CD4-positive, alpha-beta memory T cell (primary cell): ENCODE measurements at regions of chr7 and their contacts with region 1.

Region 1: GRCh38 chr7:128059143-128059988 is 28.1 kb upstream of the LRRC4 start:
- DNase-seq: peak in 4 of 5 donors; percentile 49 to 52 (median 50)
- H3K4me3 ChIP-seq: no peak overlapping the region
- H3K4me3 Mint-ChIP-seq: peak overlapping the region in 7 of 8 donors; percentile 28 to 84 (median 59)
- H3K27ac ChIP-seq: peak overlapping the region; percentile 14
- H3K27ac Mint-ChIP-seq: peak overlapping the region; percentile 17 to 94 (median 58)
- H3K4me1 ChIP-seq: peaks cover 38% of the 10 kb centered on the region
- H3K4me1 Mint-ChIP-seq: peaks cover 37 to 65% (median 46%) of the 10 kb centered on the region in 4 donors
- H3K27me3 ChIP-seq: no peaks in the 10 kb centered on the region
- H3K27me3 Mint-ChIP-seq: no peaks in the 10 kb centered on the region

Region 2: DNA sequence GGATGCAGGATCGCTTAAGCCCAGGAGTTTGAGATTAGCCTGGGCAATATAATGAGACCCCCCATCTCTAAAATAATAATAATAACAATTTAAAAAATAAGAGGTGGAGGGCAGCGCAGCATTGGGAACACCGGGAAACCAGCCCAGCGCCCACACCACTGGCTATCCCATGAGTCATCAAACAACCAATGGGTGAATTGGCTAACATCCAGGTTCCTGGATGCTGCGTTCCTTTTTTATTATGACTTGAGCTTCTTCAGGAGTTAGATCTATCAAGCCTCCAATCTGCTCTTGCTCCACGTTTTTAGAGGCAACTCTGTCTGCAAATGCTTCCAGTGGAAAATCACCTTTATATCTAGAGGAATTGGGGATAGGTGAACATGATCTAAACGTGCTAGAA is 18.2 kb before region 1 on chr7:
- CTCF ChIA-PET with region 1: no interaction called
- POLR2A ChIA-PET with region 1: no interaction called
- intact Hi-C with region 1: no loop called
- DNase-seq: no peak
- H3K4me3 ChIP-seq: no peak overlapping the region
- H3K4me3 Mint-ChIP-seq: no peak overlapping the region
- H3K27ac ChIP-seq: no peak overlapping the region
- H3K27ac Mint-ChIP-seq: no peak overlapping the region
- H3K4me1 ChIP-seq: no peaks in the 10 kb centered on the region
- H3K4me1 Mint-ChIP-seq: peaks cover 7 to 28% (median 10%) of the 10 kb centered on the region in 4 donors
- H3K27me3 ChIP-seq: no peaks in the 10 kb centered on the region
- H3K27me3 Mint-ChIP-seq: no peaks in the 10 kb centered on the region

Region 3: DNA sequence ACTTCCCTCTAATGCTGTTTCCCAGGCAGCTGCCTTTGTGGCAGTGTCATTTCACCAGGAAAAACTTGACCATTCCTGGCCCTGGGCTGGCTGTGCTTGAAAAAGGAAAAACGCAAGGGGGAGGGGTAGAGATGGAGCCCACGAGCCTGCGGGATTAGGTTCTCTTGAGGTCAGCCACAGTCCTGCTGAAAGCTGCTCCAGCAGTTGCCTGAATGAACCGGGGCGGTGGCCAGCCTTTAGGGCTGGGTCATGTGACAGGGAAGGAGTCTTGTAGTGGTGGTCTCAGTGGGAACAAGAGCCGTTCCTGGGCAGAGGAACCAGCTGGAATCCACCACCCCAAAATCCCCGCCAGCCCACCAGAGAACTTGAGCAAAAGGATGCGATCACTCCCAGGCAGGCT is 23.1 kb after region 1 on chr7:
- CTCF ChIA-PET with region 1: no interaction called
- POLR2A ChIA-PET with region 1: no interaction called
- intact Hi-C with region 1: loop called (anchors 1 kb)
- DNase-seq: no peak
- H3K4me3 ChIP-seq: no peak overlapping the region
- H3K4me3 Mint-ChIP-seq: no peak overlapping the region
- H3K27ac ChIP-seq: no peak overlapping the region
- H3K27ac Mint-ChIP-seq: peak overlapping the region in 1 of 7 donors; percentile 63
- H3K4me1 ChIP-seq: no peaks in the 10 kb centered on the region
- H3K4me1 Mint-ChIP-seq: peaks cover 0 to 2% (median 0%) of the 10 kb centered on the region in 4 donors
- H3K27me3 ChIP-seq: no peaks in the 10 kb centered on the region
- H3K27me3 Mint-ChIP-seq: no peaks in the 10 kb centered on the region

Region 4: GRCh38 chr7:128108641-128109423 is 49.5 kb after region 1 on chr7:
- CTCF ChIA-PET with region 1: no interaction called
- POLR2A ChIA-PET with region 1: interaction called, 5 read pairs
- intact Hi-C with region 1: loop called (anchors 1 kb)
- DNase-seq: peak in 4 of 5 donors; percentile 53 to 69 (median 62)
- H3K4me3 ChIP-seq: peak overlapping the region; percentile 20 to 21
- H3K4me3 Mint-ChIP-seq: peak overlapping the region; percentile 71 to 93 (median 84)
- H3K27ac ChIP-seq: peak overlapping the region; percentile 10
- H3K27ac Mint-ChIP-seq: peak overlapping the region; percentile 72 to 96 (median 83)
- H3K4me1 ChIP-seq: peaks cover 65% of the 10 kb centered on the region
- H3K4me1 Mint-ChIP-seq: peaks cover 50 to 75% (median 63%) of the 10 kb centered on the region in 4 donors
- H3K27me3 ChIP-seq: no peaks in the 10 kb centered on the region
- H3K27me3 Mint-ChIP-seq: no peaks in the 10 kb centered on the region